ENCODE measurements at regions of chrX and their contacts with region 1.

Region 1: GRCh38 chrX:46321676-46322075 is 223.5 kb downstream of the ZNF674 start:
- DNase-seq: no peak
- H3K4me3 Mint-ChIP-seq: no peak overlapping the region
- H3K27ac Mint-ChIP-seq: peak overlapping the region; percentile 62
- H3K4me1 Mint-ChIP-seq: peaks cover 48% of the 10 kb centered on the region
- H3K27me3 Mint-ChIP-seq: no peaks in the 10 kb centered on the region

Region 2: GRCh38 chrX:46279925-46280313 is 41.8 kb before region 1 on chrX:
- intact Hi-C with region 1: loop called (anchors 2 kb)
- DNase-seq: no peak
- H3K4me3 Mint-ChIP-seq: no peak overlapping the region
- H3K27ac Mint-ChIP-seq: peak overlapping the region; percentile 54
- H3K4me1 Mint-ChIP-seq: peaks cover 12% of the 10 kb centered on the region
- H3K27me3 Mint-ChIP-seq: no peaks in the 10 kb centered on the region